Breast epithelium (tissue), 4 donors: ENCODE measurements at regions of chr10 and their contacts with region 1.

Region 1: GRCh38 chr10:25226775-25227682 is 52.2 kb downstream of the GPR158 start:
- DNase-seq: no peak
- H3K4me3 ChIP-seq: no peak overlapping the region
- H3K27ac ChIP-seq: no peak overlapping the region
- H3K4me1 ChIP-seq: no peaks in the 10 kb centered on the region
- H3K27me3 ChIP-seq: no peaks in the 10 kb centered on the region
- CTCF ChIP-seq: peak in 1 of 3 donors; percentile 25
- POLR2A ChIP-seq: no peak

Region 2: DNA sequence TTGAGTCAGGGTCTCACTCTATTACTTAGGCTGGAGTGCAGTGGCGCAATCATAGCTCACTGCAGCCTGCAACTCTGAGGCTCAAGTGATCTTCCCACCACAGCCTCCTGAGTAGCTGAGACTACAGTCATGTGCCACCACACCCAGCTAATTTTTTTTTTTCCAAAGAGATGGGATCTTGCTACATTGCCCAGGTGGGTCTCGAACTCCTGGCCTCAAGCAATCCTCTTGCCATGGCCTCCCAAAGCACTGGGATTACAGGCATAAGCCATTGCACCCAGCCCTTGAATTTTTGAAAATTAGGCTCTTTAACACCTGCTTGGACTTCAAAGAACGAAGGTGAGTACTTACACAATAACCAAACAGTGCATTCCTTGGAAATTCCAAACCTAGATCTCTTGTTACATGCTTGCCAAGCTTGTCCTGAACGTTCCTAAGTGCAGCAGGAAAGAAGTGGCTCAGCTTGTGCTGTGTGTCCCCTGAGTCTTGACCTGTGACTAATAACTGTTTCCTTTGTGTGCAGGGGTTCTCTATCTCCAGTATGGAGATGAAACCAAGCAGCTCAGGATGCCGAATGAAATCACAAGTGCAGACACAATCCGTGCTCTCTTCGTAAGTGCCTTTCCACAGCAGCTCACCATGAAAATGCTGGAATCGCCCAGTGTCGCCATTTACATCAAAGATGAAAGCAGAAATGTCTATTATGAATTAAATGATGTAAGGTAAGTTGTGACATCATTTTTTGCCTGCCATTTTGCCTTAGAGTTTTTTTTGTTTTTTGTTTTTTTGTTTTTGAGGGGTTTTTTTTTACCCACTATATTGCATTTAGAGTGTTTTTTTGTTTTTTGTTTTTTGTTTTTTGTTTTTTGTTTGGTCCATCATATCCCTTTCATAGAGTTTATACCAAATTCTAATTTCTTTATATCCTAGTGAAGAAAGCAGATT is 794.3 kb before region 1 on chr10:
- intact Hi-C with region 1: loop called (anchors 10 kb)
- DNase-seq: no peak
- H3K4me3 ChIP-seq: no peak overlapping the region
- H3K27ac ChIP-seq: no peak overlapping the region
- H3K4me1 ChIP-seq: peaks cover 0 to 5% of the 10 kb centered on the region in 2 donors
- H3K27me3 ChIP-seq: no peaks in the 10 kb centered on the region
- CTCF ChIP-seq: no peak
- POLR2A ChIP-seq: no peak

Region 3: GRCh38 chr10:24873281-24873683 is 353.7 kb before region 1 on chr10:
- intact Hi-C with region 1: no loop called
- DNase-seq: peak in 1 of 2 donors; percentile 30
- H3K4me3 ChIP-seq: no peak overlapping the region
- H3K27ac ChIP-seq: peak overlapping the region; percentile 69 to 84
- H3K4me1 ChIP-seq: no peaks in the 10 kb centered on the region
- H3K27me3 ChIP-seq: no peaks in the 10 kb centered on the region
- CTCF ChIP-seq: no peak
- POLR2A ChIP-seq: no peak

Region 4: DNA sequence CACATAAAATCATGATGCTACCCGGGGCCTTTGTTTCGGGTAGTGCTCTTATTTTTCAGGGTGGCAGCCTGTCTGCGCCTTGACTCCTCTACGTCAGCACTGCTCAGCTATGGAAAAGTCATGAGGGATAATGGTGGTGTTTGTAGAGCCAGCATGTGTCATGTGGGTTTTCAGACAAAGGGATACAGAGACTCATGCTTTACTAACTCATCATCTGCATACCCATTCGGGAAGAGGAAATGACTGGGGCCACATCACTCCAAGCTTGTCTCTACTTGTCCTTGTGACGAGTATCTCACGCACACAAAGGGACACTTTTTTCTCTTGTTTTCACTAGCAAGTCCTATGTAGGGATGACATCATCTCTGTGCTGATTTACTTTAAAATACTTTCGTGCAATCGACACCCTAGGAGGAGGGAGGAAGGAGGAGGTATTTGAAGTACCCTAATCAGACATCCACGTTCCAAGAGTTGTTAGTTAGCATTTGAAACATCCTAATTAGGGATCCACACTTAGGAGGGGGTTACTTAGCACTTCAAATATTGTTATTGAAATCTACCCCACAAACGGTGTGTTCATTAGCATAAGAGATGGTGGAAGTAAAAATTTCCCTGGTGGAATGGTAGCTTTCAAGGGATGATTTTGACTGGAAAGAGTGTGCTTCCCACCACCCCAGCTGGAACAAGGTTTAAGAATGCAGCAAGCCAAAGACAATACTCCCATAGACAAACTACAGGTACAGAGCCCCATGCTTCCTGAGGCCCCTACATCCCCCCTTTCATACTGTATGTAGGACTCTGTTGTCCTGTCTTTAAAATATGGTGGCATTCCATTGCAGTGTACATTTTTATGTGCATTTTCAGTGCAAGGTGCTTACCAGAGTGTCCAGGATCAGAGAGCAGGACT is 158.6 kb before region 1 on chr10:
- intact Hi-C with region 1: no loop called
- DNase-seq: no peak
- H3K4me3 ChIP-seq: no peak overlapping the region
- H3K27ac ChIP-seq: no peak overlapping the region
- H3K4me1 ChIP-seq: no peaks in the 10 kb centered on the region
- H3K27me3 ChIP-seq: no peaks in the 10 kb centered on the region
- CTCF ChIP-seq: no peak
- POLR2A ChIP-seq: no peak

Region 5: GRCh38 chr10:25113191-25114035 is 113.6 kb before region 1 on chr10:
- intact Hi-C with region 1: no loop called
- DNase-seq: peak; percentile 45 to 72
- H3K4me3 ChIP-seq: peak overlapping the region in 1 of 3 donors; percentile 41
- H3K27ac ChIP-seq: no peak overlapping the region
- H3K4me1 ChIP-seq: no peaks in the 10 kb centered on the region
- H3K27me3 ChIP-seq: no peaks in the 10 kb centered on the region
- CTCF ChIP-seq: peak; percentile 46 to 66 (median 57)
- POLR2A ChIP-seq: no peak

Region 6: GRCh38 chr10:26391701-26392695 is 1165.0 kb after region 1 on chr10:
- intact Hi-C with region 1: no loop called
- DNase-seq: no peak
- H3K4me3 ChIP-seq: no peak overlapping the region
- H3K27ac ChIP-seq: no peak overlapping the region
- H3K4me1 ChIP-seq: no peaks in the 10 kb centered on the region
- H3K27me3 ChIP-seq: peaks cover 0 to 19% of the 10 kb centered on the region in 2 donors
- CTCF ChIP-seq: no peak
- POLR2A ChIP-seq: no peak